ENCODE measurements at regions of chr2 and their contacts with region 1.

Region 1: DNA sequence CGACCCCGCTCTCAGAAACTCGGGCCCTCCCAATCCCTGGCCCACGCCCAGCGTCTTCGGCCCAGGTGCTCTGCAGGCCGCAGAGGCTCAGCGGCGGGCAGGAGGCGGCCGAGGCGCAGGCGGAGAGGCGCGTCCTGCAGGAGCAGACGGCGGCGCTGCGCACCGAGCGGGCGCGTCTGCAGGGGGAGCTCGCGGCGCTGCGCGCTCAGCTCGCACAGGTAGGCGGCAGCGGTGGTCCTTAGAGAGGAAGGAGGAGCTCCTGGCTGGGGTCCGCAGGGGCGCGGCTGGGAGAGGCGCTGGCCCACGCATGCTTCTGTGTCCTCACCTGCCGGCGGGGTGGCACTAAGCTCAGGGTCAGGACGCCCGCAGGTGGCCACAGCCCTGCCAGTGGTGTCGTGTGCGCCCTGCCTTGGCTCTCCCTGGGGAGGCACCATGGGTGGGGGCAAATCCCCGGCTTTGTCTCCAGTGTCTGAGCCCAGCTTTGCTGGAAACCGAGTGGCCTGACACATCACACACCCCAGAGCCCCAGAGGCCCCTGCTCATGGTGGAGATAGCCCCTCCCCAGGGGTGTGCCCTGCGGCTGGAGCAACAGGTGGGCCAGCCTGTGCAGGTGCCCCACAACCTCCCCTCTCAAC is 14.9 kb upstream of the SNED1 start:
- DNase-seq: peak; percentile 31 to 80 (median 62)
- ATAC-seq: peak; percentile 99
- H3K4me3 Mint-ChIP-seq: peak overlapping the region in 2 of 10 donors; percentile 18 to 26
- H3K27ac Mint-ChIP-seq: peak overlapping the region in 2 of 10 donors; percentile 22 to 24
- H3K4me1 Mint-ChIP-seq: peaks cover 0 to 6% (median 4%) of the 10 kb centered on the region in 4 donors
- H3K27me3 Mint-ChIP-seq: peaks cover 0 to 2% (median 0%) of the 10 kb centered on the region in 5 donors

Region 2: DNA sequence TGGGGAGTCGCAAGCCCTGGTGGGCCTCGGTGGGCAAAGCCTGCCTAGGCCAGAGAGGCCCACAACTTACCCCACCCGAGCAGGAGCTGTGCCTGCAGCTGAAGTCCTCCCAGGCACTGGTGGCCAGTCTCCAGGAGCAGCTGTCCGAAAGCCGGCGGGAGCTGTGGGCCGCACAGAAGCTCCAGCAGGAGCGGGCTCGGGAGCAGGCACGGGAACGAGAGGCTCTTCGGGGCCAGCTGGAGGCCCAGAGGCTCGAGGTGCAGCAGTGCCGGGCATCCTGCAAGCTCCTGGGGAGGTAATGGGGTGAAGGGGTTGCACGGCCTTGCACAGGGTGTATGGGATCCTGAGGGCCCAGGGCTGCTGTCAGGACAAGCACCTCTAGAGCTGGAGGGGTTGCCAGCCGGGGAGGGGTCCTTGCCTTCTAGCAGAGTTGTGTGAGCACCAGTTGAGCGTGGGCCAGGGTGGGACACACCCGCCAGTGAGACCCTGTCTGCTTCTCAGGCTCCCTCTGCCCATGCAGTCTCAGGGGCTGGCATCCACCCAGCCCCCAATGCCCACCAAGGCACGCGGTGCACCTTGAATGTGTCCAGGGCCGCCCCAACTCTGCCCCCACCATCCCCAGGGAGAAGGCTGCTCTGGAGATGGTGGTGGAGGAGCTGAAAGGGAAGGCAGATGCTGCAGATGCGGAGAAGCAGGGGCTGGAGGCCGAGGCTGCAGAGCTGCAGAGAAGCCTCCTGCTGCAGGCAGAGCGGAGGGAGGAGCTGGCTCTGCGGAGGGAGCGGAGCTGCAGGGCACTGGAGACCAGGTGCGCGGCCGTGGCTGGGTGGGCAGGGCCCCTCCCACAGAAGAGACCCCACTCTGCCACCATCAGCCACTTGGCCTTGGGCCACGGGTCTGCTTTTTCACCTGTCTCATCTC is 50.2 kb before region 1 on chr2:
- POLR2A ChIA-PET with region 1: no interaction called
- DNase-seq: peak in 2 of 10 donors; percentile 15 to 53
- ATAC-seq: no peak
- H3K4me3 Mint-ChIP-seq: no peak overlapping the region
- H3K27ac Mint-ChIP-seq: no peak overlapping the region
- H3K4me1 Mint-ChIP-seq: no peaks in the 10 kb centered on the region
- H3K27me3 Mint-ChIP-seq: peaks cover 0 to 9% (median 2%) of the 10 kb centered on the region in 5 donors

Region 3: DNA sequence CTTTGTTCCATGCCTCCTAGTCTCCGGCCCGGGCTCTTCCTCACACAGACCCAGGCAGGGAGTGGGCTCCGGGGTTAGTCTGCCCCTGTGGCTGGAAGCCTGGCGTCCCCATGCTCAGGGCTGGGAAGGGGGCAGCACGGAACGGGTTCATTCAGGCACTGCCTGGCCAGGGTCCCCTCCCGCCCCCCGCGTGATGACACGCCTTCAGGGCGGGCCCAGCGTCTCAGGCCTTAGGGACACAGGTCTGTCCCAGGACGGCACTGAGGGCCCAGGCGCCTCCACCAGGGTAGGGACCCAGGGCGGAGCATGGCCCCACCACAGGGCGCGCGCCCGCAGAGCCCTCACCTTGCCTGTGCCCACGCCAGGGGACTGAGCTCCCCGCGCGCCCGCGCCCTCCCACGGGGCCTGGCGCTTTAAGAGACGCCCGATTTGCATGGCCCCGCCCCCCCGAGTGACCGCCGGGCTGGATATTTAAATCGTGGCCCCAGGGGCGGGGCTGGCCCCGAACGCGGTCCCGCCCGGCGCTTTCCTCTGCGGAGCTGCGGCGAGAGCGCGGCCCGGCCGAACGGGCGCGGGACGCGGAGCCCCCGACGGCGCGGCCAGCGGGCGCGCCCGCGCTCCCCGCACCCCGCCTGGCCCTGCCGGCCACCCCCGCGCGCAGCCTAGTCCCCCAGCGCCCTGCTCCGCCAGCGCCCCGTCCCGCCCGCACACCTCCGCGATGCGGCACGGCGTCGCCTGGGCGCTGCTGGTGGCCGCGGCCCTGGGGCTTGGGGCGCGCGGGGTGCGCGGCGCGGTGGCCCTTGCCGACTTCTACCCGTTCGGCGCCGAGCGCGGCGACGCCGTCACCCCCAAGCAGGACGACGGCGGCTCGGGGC is 14.9 kb after region 1 on chr2 and contains the start of gene SNED1:
- POLR2A ChIA-PET with region 1: interaction called, 16 read pairs
- DNase-seq: peak; percentile 48 to 88 (median 72)
- ATAC-seq: peak; percentile 74 to 78
- H3K4me3 Mint-ChIP-seq: peak within 1 kb of the TSS; percentile 74 to 95 (median 87)
- H3K27ac Mint-ChIP-seq: peak within 1 kb of the TSS; percentile 47 to 96 (median 93)
- H3K4me1 Mint-ChIP-seq: peaks cover 17 to 46% (median 38%) of the 10 kb centered on the region in 4 donors
- H3K27me3 Mint-ChIP-seq: peaks cover 0 to 22% (median 2%) of the 10 kb centered on the region in 5 donors
- polyA plus RNA-seq, gene SNED1: 0.60 to 3.0 (median 1.4) TPM

Region 4: GRCh38 chr2:241011751-241012510 is 28.5 kb after region 1 on chr2:
- POLR2A ChIA-PET with region 1: no interaction called
- DNase-seq: peak in 8 of 10 donors; percentile 38 to 74 (median 54)
- ATAC-seq: peak; percentile 56 to 60
- H3K4me3 Mint-ChIP-seq: peak overlapping the region; percentile 19 to 76 (median 64)
- H3K27ac Mint-ChIP-seq: peak overlapping the region; percentile 72 to 96 (median 88)
- H3K4me1 Mint-ChIP-seq: peaks cover 30 to 75% (median 56%) of the 10 kb centered on the region in 4 donors
- H3K27me3 Mint-ChIP-seq: no peaks in the 10 kb centered on the region

Region 5: GRCh38 chr2:241029599-241030332 is 46.3 kb after region 1 on chr2:
- POLR2A ChIA-PET with region 1: no interaction called
- DNase-seq: no peak
- ATAC-seq: no peak
- H3K4me3 Mint-ChIP-seq: no peak overlapping the region
- H3K27ac Mint-ChIP-seq: no peak overlapping the region
- H3K4me1 Mint-ChIP-seq: peaks cover 2 to 9% (median 7%) of the 10 kb centered on the region in 4 donors
- H3K27me3 Mint-ChIP-seq: no peaks in the 10 kb centered on the region

Measured in naive thymus-derived CD8-positive, alpha-beta T cell (primary cell).